Activated T-helper 1 cell treated with anti-CD3 and anti-CD28 coated beads, Interleukin-12 subunit alpha, Interleukin-12 subunit beta, Interleukin-2, Interleukin-4 antibody, amounts not matched to agents 30 ng/mL and 10 ng/mL and 1 ng/mL, durations not matched to agents 14 hours and 24 hours and 36 hours (primary cell): ENCODE measurements at regions of chr1 and their contacts with region 1.

Region 1: DNA sequence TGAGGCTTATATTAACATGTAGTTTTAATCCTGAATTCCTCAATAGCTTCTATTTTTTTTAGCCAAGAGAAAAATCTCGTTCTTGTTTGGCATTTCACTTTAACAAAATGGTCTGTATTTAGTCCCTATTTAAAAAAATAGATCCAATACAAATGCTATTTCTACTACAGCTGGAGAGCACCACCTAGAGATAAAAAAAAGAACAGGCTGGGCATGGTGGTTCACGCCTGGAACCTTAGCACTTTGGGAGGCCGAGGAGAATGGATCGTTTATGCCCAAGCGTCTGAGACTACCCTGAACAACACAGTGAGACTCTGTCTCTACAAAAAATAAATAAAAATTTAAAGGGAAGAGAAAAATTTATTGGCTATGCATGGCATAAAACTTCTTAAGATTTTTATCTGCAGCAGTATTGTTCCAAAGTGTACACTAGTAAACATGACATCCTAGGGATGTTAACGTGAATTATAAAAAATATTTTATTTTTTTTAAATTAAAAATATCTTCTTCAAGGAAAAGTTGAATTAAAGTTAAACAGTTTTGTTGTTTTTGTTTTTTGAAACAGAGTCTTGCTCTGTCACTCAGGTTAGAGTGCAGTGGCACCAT is 4.4 kb downstream of the ST7L start:
- DNase-seq: no peak
- H3K4me3 Mint-ChIP-seq: no peak overlapping the region
- H3K27ac Mint-ChIP-seq: no peak overlapping the region
- H3K4me1 Mint-ChIP-seq: peaks cover 33% of the 10 kb centered on the region
- H3K27me3 Mint-ChIP-seq: no peaks in the 10 kb centered on the region

Region 2: GRCh38 chr1:111856411-111857185 is 758.0 kb before region 1 on chr1:
- intact Hi-C with region 1: no loop called
- DNase-seq: no peak
- H3K4me3 Mint-ChIP-seq: no peak overlapping the region
- H3K27ac Mint-ChIP-seq: no peak overlapping the region
- H3K4me1 Mint-ChIP-seq: no peaks in the 10 kb centered on the region
- H3K27me3 Mint-ChIP-seq: peaks cover 9% of the 10 kb centered on the region

Region 3: GRCh38 chr1:112358798-112359408 is 255.7 kb before region 1 on chr1:
- intact Hi-C with region 1: loop called (anchors 1 kb)
- DNase-seq: no peak
- H3K4me3 Mint-ChIP-seq: no peak overlapping the region
- H3K27ac Mint-ChIP-seq: no peak overlapping the region
- H3K4me1 Mint-ChIP-seq: no peaks in the 10 kb centered on the region
- H3K27me3 Mint-ChIP-seq: peaks cover 28% of the 10 kb centered on the region

Region 4: GRCh38 chr1:112390775-112391602 is 223.6 kb before region 1 on chr1:
- intact Hi-C with region 1: loop called (anchors 1 kb)
- DNase-seq: peak; percentile 75
- H3K4me3 Mint-ChIP-seq: peak overlapping the region; percentile 70
- H3K27ac Mint-ChIP-seq: peak overlapping the region; percentile 15
- H3K4me1 Mint-ChIP-seq: peaks cover 37% of the 10 kb centered on the region
- H3K27me3 Mint-ChIP-seq: peaks cover 1% of the 10 kb centered on the region

Region 5: GRCh38 chr1:112402682-112403643 is 211.6 kb before region 1 on chr1:
- intact Hi-C with region 1: no loop called
- DNase-seq: no peak
- H3K4me3 Mint-ChIP-seq: no peak overlapping the region
- H3K27ac Mint-ChIP-seq: no peak overlapping the region
- H3K4me1 Mint-ChIP-seq: peaks cover 12% of the 10 kb centered on the region
- H3K27me3 Mint-ChIP-seq: peaks cover 3% of the 10 kb centered on the region

Region 6: DNA sequence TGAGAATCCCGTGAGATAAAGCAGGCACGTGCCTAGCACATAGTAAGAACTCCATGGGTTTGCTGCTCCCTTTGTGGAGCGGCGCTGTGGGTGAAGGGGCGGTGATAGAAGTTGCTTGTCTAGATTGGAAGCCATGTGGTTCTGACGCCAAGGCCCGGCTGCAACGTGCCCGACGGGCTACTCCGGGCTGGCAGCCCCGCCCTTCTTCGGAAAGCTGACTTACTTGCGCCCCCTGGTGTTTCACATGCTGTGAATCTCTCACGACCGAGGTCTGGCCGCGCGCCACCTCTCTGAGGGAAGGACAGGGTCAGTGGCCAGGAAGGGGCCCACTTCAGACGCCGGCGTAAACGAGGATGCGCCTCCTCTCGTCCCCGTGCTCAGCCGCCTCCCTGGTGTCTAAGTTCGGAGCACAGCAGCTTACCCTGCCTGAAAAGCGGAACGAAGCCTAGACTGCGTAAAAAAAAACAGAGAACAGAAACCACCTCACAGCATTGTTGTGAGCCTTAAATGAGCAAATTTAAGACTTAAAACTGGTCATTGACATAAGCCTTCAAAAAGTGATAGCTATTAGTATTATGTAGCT is 148.4 kb before region 1 on chr1:
- intact Hi-C with region 1: loop called (anchors 1 kb)
- DNase-seq: peak; percentile 81
- H3K4me3 Mint-ChIP-seq: peak overlapping the region; percentile 81
- H3K27ac Mint-ChIP-seq: no peak overlapping the region
- H3K4me1 Mint-ChIP-seq: peaks cover 18% of the 10 kb centered on the region
- H3K27me3 Mint-ChIP-seq: peaks cover 30% of the 10 kb centered on the region

Region 7: GRCh38 chr1:112501810-112502641 is 112.5 kb before region 1 on chr1:
- intact Hi-C with region 1: loop called (anchors 1 kb)
- DNase-seq: peak; percentile 33
- H3K4me3 Mint-ChIP-seq: peak overlapping the region; percentile 63
- H3K27ac Mint-ChIP-seq: no peak overlapping the region
- H3K4me1 Mint-ChIP-seq: peaks cover 5% of the 10 kb centered on the region
- H3K27me3 Mint-ChIP-seq: peaks cover 62% of the 10 kb centered on the region

Region 8: DNA sequence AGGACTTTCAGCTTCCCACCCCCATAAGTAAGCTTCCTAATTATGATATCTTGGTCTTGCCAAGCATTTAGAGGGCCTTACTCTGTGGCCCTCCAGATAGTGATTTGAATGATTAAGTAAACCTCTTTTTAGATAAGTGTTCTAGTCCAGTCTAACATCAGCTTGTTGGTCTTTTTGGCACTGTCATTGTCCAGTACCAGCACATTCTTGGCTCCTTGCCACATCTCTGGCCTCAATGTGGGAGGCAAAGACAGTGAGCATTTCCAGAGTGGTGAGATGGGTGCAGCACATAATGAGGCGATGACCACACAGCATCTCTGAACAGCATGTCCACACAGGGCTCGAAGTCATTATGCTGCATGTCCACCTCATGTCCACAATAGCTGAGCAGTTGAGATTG is 11.1 kb after region 1 on chr1:
- intact Hi-C with region 1: no loop called
- DNase-seq: no peak
- H3K4me3 Mint-ChIP-seq: peak overlapping the region; percentile 33
- H3K27ac Mint-ChIP-seq: peak overlapping the region; percentile 26
- H3K4me1 Mint-ChIP-seq: peaks cover 78% of the 10 kb centered on the region
- H3K27me3 Mint-ChIP-seq: no peaks in the 10 kb centered on the region

Region 9: GRCh38 chr1:113507552-113508214 is 893.1 kb after region 1 on chr1:
- intact Hi-C with region 1: no loop called
- DNase-seq: no peak
- H3K4me3 Mint-ChIP-seq: no peak overlapping the region
- H3K27ac Mint-ChIP-seq: no peak overlapping the region
- H3K4me1 Mint-ChIP-seq: no peaks in the 10 kb centered on the region
- H3K27me3 Mint-ChIP-seq: no peaks in the 10 kb centered on the region